ENCODE measurements at regions of chr5 and their contacts with region 1.

Region 1: GRCh38 chr5:86665984-86666760 is 48.4 kb downstream of the COX7C start:
- DNase-seq: no peak
- H3K4me3 ChIP-seq: no peak overlapping the region
- H3K27ac ChIP-seq: no peak overlapping the region
- H3K4me1 ChIP-seq: no peaks in the 10 kb centered on the region
- H3K27me3 ChIP-seq: no peaks in the 10 kb centered on the region; the same call in 1 of the 2 replicates
- CTCF ChIP-seq: no peak
- EP300 ChIP-seq: no peak
- RAD21 ChIP-seq: no peak

Region 2: GRCh38 chr5:86679529-86679928 is 13.4 kb after region 1 on chr5:
- CTCF ChIA-PET with region 1: interaction called, 10 read pairs
- POLR2A ChIA-PET with region 1: no interaction called
- DNase-seq: peak; percentile 22
- H3K4me3 ChIP-seq: no peak overlapping the region; a peak in 1 of 4 replicates
- H3K27ac ChIP-seq: no peak overlapping the region
- H3K4me1 ChIP-seq: no peaks in the 10 kb centered on the region
- H3K27me3 ChIP-seq: no peaks in the 10 kb centered on the region
- CTCF ChIP-seq: peak; percentile 72
- EP300 ChIP-seq: no peak
- RAD21 ChIP-seq: peak; percentile 79

Measured in SK-N-SH (cell line).